ENCODE measurements at regions of chr21 and their contacts with region 1.

Region 1: DNA sequence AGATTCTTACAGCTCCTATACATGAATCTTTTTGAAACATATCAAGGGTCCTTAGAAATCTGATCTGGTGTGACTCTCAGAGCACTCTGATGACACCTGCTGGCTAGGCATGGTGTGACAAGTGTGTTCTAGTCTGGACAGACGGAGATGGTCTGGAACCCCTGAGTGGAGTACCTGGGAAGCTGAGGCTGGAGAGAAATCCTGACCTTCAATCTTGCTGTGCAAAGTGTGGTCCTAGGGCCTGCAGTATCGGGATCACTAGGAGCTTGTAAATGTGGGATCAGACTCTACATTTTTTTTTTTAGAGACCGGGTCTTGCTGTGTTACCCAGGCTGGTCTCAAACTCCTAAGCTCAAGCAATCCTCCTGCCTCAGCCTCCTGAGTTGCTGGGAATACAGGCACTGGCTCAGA is 78.6 kb upstream of the SOD1 start:
- DNase-seq: peak; percentile 61
- H3K4me3 ChIP-seq: no peak overlapping the region
- H3K27ac ChIP-seq: no peak overlapping the region
- H3K4me1 ChIP-seq: no peaks in the 10 kb centered on the region
- H3K27me3 ChIP-seq: no peaks in the 10 kb centered on the region
- CTCF ChIP-seq: peak; percentile 52 to 78 (median 76)
- POLR2A ChIP-seq: no peak

Region 2: DNA sequence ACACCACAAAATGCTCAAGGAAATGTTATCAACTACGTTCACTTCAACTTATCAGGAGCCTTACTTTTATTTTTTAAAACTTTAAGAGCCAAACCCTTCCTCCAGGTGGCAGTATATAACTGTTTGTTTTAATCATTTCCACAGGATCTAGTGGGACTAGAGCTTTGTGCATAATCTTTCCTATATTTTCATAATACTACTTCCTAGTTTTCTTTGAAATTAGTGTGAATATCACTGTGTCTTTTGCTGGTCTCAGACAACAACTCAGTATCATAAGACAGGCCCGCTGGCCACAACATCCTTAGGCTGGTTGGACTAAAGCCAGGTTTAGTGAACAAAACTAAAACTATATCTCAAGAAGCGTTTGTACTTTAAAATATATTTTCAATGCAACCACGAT is 382.3 kb before region 1 on chr21:
- intact Hi-C with region 1: loop called (anchors 2 kb)
- DNase-seq: peak; percentile 23
- H3K4me3 ChIP-seq: no peak overlapping the region
- H3K27ac ChIP-seq: no peak overlapping the region
- H3K4me1 ChIP-seq: no peaks in the 10 kb centered on the region
- H3K27me3 ChIP-seq: no peaks in the 10 kb centered on the region
- CTCF ChIP-seq: peak in 3 of 4 experiments; percentile 68 to 80 (median 75)
- POLR2A ChIP-seq: no peak

Measured in prostate gland (tissue), 2 donors.